OCI-LY7 (cell line): ENCODE measurements at regions of chr4 and their contacts with region 1.

Region 1: GRCh38 chr4:80876810-80877209 is 153.7 kb upstream of the BMP3 start:
- DNase-seq: peak; percentile 67
- H3K4me3 ChIP-seq: peak overlapping the region; percentile 4
- H3K27ac ChIP-seq: peak overlapping the region; percentile 98
- H3K4me1 ChIP-seq: peaks cover 58% of the 10 kb centered on the region
- CTCF ChIP-seq: no peak

Region 2: GRCh38 chr4:80492761-80493160 is 384.0 kb before region 1 on chr4:
- CTCF ChIA-PET with region 1: no interaction called
- POLR2A ChIA-PET with region 1: interaction called, 4 read pairs
- intact Hi-C with region 1: loop called (anchors 5 kb)
- DNase-seq: peak; percentile 27
- H3K4me3 ChIP-seq: no peak overlapping the region
- H3K27ac ChIP-seq: no peak overlapping the region
- H3K4me1 ChIP-seq: peaks cover 21% of the 10 kb centered on the region
- CTCF ChIP-seq: no peak

Region 3: DNA sequence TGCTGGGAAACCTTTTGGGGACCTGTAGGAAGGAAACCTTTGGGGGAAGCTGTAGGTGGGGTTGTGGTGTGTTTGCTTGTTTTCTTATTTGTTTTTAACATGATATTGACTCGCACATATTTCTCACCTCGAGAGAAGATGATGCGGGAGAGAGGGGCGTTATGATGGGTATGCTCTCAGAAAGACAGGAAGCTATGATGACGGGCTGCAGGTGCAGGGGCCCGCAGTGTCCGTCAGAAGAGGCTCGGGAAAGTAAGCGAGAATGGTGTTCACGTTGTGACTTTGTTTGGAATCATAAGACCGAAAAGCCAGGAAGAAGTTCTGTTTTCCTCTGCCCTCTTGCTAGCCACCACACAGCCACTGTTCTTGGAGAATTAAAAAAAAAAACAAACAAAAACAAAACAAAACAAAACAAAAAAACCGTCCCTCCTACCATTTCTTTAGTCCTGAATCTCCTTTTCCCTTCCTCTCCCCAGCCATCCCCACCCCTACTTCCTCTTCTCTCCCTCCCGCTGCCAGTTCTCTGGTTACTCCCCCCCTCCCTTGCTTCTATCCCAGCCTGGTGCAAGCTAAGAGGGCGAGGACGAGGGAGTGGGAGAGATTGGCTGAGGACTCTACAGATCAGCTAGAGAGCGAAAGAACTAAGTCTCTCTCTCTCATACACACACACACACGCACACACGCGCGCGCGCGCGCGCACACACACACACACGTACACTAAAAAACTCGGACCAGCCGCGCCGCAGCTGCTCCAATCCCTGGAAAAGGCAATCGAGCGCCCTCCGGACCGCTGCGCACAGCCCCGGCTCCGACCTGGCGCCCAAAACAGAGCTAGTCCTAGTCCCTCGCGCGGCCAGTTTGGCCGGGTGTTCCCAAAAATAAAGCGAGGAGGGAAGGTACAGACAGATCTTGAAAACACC is 153.5 kb after region 1 on chr4 and contains the start of gene BMP3:
- CTCF ChIA-PET with region 1: interaction called, 3 read pairs
- POLR2A ChIA-PET with region 1: interaction called, 57 read pairs
- intact Hi-C with region 1: loop called (anchors 1 kb)
- DNase-seq: peak; percentile 82
- H3K4me3 ChIP-seq: peak within 1 kb of the TSS; percentile 79
- H3K27ac ChIP-seq: peak within 1 kb of the TSS; percentile 92
- H3K4me1 ChIP-seq: peaks cover 55% of the 10 kb centered on the region
- CTCF ChIP-seq: no peak
- total RNA-seq, gene BMP3: 40.6 and 45.8 TPM in 2 replicates